Sigmoid colon (tissue), 7 donors: ENCODE measurements at regions of chr5 and their contacts with region 1.

Region 1: DNA sequence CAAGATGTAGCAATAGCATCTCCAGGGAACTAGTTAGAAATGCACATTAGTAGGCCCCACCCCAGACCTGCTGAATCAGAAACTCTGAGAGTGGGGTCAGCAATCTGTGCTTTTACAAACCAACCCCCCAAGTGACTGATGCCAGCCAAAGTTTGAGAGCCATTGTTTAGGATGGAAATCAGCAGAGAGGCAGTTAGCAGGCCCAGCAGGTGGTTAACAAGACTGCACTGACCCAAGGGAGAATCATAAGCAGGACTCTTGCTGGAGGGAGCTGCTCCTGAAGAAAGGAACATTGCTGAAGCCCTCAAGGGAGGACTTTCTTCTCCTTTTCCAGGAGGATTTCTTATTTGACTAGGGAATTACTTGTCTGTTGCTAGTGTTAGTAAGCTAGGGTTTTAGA is 74.2 kb upstream of the SLC12A2 start:
- DNase-seq: no peak
- H3K4me3 ChIP-seq: no peak overlapping the region
- H3K27ac ChIP-seq: no peak overlapping the region
- H3K4me1 ChIP-seq: no peaks in the 10 kb centered on the region
- H3K27me3 ChIP-seq: no peaks in the 10 kb centered on the region
- CTCF ChIP-seq: no peak
- EP300 ChIP-seq: no peak
- POLR2A ChIP-seq: no peak

Region 2: DNA sequence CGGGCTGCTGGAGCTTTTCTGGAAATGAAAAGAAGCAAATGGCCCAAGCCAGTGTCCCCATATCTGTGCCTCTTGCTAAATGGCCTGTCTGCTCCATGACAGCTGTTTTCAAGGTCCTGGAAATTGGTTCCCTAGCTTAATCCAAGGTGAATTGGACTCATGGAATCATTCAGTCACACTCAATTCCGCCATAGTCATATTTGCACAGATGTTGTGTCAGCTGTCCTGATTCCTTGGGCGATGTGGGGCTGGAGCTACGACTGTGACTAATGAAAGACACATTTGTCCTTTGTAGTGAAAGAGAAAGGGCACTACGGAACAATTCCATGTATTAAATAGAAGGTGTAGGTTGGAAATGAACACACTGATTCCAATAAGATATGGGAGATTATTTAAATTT is 821.7 kb before region 1 on chr5:
- intact Hi-C with region 1: no loop called
- DNase-seq: no peak
- H3K4me3 ChIP-seq: no peak overlapping the region
- H3K27ac ChIP-seq: no peak overlapping the region
- H3K4me1 ChIP-seq: no peaks in the 10 kb centered on the region
- H3K27me3 ChIP-seq: no peaks in the 10 kb centered on the region
- CTCF ChIP-seq: no peak
- EP300 ChIP-seq: no peak
- POLR2A ChIP-seq: no peak

Region 3: DNA sequence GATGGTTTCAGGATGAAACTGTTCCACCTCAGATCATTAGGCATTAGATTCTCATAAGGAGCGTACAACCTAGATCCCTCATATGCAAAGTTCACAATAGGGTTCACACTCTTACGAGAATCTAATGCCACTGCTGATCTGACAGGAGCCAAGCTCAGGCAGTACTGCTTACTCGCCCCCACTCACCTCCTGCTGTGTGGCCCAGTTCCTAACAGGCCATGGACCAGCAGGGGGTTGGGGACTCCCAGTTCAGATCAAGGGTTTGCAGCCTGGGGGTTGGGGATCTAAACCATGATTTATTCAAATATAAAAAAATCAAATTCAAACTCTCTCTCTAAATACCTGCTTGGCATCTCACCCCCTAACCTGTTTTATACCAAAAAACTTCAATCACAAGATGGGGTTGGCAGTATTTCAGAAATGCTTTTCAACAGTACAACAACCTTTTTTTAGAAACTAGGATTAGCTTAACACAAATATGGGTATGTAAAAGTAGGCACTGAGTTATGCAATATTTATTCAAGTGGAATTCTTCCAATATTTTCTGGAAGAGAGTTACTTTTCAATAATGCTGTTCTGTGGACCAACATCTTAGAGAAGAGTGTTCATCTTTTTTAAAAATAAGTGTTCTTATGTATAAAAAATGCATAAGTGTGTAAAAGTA is 44.0 kb after region 1 on chr5:
- intact Hi-C with region 1: loop called (anchors 10 kb)
- DNase-seq: no peak
- H3K4me3 ChIP-seq: no peak overlapping the region
- H3K27ac ChIP-seq: peak overlapping the region; percentile 15 to 79 (median 67)
- H3K4me1 ChIP-seq: peaks cover 0 to 22% (median 6%) of the 10 kb centered on the region in 4 donors
- H3K27me3 ChIP-seq: no peaks in the 10 kb centered on the region
- CTCF ChIP-seq: no peak
- EP300 ChIP-seq: no peak
- POLR2A ChIP-seq: no peak